ENCODE measurements at regions of chr19 and their contacts with region 1.

Region 1: DNA sequence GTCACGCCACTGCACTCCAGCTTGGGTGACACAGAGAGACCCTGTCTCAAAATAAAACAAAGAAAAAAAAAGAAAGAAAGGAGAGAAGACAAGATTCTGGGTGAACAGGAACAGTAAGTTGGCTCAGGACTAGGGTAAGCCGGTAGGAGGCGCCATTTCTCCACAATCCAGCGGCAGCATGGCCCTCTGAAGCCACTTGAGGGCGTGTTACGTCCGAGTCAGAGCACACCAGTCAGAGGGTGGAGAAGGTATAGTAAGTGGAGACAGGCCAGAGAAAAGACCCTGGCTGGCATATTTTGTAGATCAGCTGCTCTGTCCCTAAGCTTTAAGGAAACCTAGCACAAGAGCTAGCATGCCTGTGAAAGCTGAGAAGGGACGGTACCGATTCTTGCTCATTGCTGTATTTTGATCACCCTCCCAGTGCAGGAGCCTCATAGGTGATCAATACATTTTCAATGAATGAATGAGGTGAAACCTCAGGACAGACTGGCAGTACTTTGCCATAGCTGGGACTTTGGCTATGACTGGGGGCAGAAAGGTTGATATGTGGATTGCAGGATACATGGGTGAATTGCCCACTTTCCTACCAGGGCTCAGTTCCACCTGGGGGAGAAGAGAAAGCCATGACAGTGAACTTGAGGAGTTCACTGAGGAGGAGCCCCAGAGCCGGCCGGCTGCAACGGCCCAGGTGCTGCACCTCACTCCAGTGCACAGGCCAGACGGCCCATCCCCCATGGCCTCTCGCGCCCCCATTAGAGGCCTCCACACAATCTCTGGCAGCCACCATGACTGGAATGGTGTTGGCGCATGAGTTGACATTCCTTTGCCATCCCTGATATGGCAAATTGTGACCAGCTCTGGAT is 23.5 kb downstream of the POU2F2 start:
- DNase-seq: peak; percentile 79 to 91 (median 83)
- H3K4me3 ChIP-seq: no peak overlapping the region
- H3K4me3 Mint-ChIP-seq: no peak overlapping the region
- H3K27ac ChIP-seq: no peak overlapping the region
- H3K27ac Mint-ChIP-seq: peak overlapping the region in 5 of 8 donors; percentile 36 to 77 (median 58)
- H3K4me1 ChIP-seq: peaks cover 6% of the 10 kb centered on the region
- H3K4me1 Mint-ChIP-seq: peaks cover 3 to 12% (median 11%) of the 10 kb centered on the region in 3 donors
- H3K27me3 ChIP-seq: no peaks in the 10 kb centered on the region
- H3K27me3 Mint-ChIP-seq: no peaks in the 10 kb centered on the region

Region 2: GRCh38 chr19:41959056-41960053 is 149.4 kb before region 1 on chr19 and contains the start of gene RABAC1:
- CTCF ChIA-PET with region 1: no interaction called
- POLR2A ChIA-PET with region 1: no interaction called
- DNase-seq: peak; percentile 79 to 90 (median 82)
- H3K4me3 ChIP-seq: peak within 1 kb of the TSS; percentile 92
- H3K4me3 Mint-ChIP-seq: peak within 1 kb of the TSS; percentile 92 to 96 (median 94)
- H3K27ac ChIP-seq: peak within 1 kb of the TSS; percentile 86
- H3K27ac Mint-ChIP-seq: peak within 1 kb of the TSS; percentile 82 to 98 (median 94)
- H3K4me1 ChIP-seq: peaks cover 16% of the 10 kb centered on the region
- H3K4me1 Mint-ChIP-seq: peaks cover 17 to 22% (median 21%) of the 10 kb centered on the region in 3 donors
- H3K27me3 ChIP-seq: no peaks in the 10 kb centered on the region
- H3K27me3 Mint-ChIP-seq: no peaks in the 10 kb centered on the region
- total RNA-seq, gene RABAC1: 74.7 to 83.3 TPM

Region 3: DNA sequence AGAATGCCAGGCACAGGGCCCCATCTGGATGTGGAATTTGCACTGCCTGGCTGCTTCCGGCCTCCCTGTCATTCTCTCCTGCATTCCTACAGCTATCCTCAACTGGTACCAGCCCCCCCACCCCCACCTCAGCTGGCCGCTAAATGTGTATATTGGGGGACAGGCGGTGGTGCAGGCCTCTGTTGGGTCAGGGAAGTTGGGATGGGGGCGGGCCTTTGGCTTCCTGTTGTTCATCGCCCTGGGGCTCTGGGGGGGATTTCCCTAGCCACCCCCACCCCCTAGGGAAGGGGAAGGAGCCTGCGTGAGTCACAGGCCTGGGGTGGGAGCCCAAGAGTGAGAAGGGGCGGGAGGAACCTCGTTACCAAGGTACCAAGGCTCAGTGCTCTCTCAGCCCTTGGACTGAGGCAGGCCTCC is 12.9 kb after region 1 on chr19:
- CTCF ChIA-PET with region 1: interaction called, 31 read pairs
- POLR2A ChIA-PET with region 1: interaction called, 3 read pairs
- DNase-seq: peak; percentile 41 to 83 (median 53)
- H3K4me3 ChIP-seq: peak overlapping the region; percentile 32
- H3K4me3 Mint-ChIP-seq: peak overlapping the region in 6 of 7 donors; percentile 45 to 81 (median 70)
- H3K27ac ChIP-seq: peak overlapping the region; percentile 64
- H3K27ac Mint-ChIP-seq: peak overlapping the region; percentile 86 to 98 (median 95)
- H3K4me1 ChIP-seq: peaks cover 48% of the 10 kb centered on the region
- H3K4me1 Mint-ChIP-seq: peaks cover 51 to 63% (median 51%) of the 10 kb centered on the region in 3 donors
- H3K27me3 ChIP-seq: no peaks in the 10 kb centered on the region
- H3K27me3 Mint-ChIP-seq: no peaks in the 10 kb centered on the region

Region 4: DNA sequence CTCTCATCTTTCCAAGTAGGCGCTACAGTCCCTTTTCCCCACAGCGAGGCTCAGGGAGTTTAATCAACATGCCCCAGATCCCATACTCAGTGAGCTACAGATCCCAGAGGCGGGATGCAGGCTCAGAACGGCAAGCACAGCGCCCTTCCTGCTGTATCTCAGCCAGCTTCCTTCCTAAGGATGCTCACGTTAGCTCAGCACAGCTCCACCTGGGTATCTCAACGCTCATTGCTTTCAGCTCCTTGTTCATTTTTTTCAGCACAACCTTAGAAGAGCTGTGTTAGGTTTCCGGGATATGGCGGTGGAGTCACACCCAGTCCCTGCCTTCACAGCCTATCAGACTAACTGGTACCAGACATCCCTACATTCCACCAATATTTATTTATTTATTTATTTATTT is 213.5 kb after region 1 on chr19:
- CTCF ChIA-PET with region 1: interaction called, 10 read pairs
- POLR2A ChIA-PET with region 1: no interaction called
- DNase-seq: no peak
- H3K4me3 ChIP-seq: no peak overlapping the region
- H3K4me3 Mint-ChIP-seq: peak overlapping the region in 1 of 7 donors; percentile 29
- H3K27ac ChIP-seq: no peak overlapping the region
- H3K27ac Mint-ChIP-seq: no peak overlapping the region
- H3K4me1 ChIP-seq: peaks cover 21% of the 10 kb centered on the region
- H3K4me1 Mint-ChIP-seq: peaks cover 15 to 28% (median 19%) of the 10 kb centered on the region in 3 donors
- H3K27me3 ChIP-seq: peaks cover 3% of the 10 kb centered on the region
- H3K27me3 Mint-ChIP-seq: peaks cover 14 to 15% of the 10 kb centered on the region in 2 donors